Activated naive CD8-positive, alpha-beta T cell treated with anti-CD3 and anti-CD28 coated beads, Interleukin-2, amount 10 ng/mL, durations not matched to agents 7 days and 5 days (primary cell): ENCODE measurements at regions of chr15 and their contacts with region 1.

Region 1: GRCh38 chr15:40405501-40406381 is at the start of gene IVD:
- DNase-seq: peak; percentile 91
- ATAC-seq: peak; percentile 99
- H3K4me3 Mint-ChIP-seq: peak within 1 kb of the TSS; percentile 86
- H3K27ac Mint-ChIP-seq: peak within 1 kb of the TSS; percentile 93
- H3K4me1 Mint-ChIP-seq: peaks cover 32% of the 10 kb centered on the region
- H3K27me3 Mint-ChIP-seq: no peaks in the 10 kb centered on the region
- total RNA-seq, gene IVD: 92.4 to 95.2 TPM

Region 2: GRCh38 chr15:40367686-40368611 is 37.8 kb before region 1 on chr15:
- POLR2A ChIA-PET with region 1: interaction called, 11 read pairs
- DNase-seq: peak; percentile 91
- ATAC-seq: peak; percentile 94
- H3K4me3 Mint-ChIP-seq: peak overlapping the region; percentile 80
- H3K27ac Mint-ChIP-seq: peak overlapping the region; percentile 78
- H3K4me1 Mint-ChIP-seq: peaks cover 14% of the 10 kb centered on the region
- H3K27me3 Mint-ChIP-seq: peaks cover 15% of the 10 kb centered on the region

Region 3: DNA sequence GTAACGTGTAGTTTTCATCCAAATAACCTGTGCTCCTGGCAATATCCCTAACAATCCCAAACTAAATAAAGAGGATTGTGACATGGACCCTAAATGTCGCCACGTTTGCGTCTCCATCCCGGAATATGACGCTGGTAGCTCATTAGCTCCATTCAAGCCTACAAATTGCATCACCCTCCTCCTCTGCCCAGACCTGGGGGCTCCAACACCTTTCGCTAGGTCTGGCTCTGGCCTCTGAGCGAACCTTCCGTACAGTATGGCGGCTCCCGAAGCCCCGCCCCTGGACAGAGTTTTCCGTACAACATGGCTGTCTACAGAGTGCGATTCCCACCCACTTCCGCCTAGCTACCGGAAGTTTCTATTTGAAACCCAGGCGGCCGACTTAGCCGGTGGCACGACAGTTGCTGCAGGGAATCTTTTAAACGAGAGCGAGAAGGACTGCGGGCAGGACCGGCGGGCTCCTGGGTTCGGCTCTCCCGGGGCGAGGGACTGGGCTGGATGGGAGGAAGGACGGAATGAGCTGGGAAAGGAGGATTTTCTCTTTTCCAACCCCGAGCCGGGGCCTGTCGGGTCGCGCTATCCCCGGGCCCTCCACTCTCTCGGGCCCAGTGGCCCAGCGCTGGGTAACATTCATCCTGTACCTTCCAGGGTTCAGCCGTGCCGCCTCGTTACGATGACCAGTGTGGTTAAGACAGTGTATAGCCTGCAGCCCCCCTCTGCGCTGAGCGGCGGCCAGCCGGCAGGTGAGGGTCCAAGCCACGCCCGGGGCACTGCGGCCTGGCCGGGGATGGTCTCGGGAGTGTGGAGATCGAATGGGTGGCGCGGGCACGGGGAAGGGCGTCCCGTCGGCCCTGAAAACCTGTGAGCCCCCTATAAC is 22.9 kb before region 1 on chr15 and contains the start of gene KNSTRN:
- POLR2A ChIA-PET with region 1: interaction called, 31 read pairs
- DNase-seq: peak; percentile 86
- ATAC-seq: peak; percentile 97
- H3K4me3 Mint-ChIP-seq: peak within 1 kb of the TSS; percentile 99
- H3K27ac Mint-ChIP-seq: peak within 1 kb of the TSS; percentile 93
- H3K4me1 Mint-ChIP-seq: peaks cover 23% of the 10 kb centered on the region
- H3K27me3 Mint-ChIP-seq: peaks cover 8% of the 10 kb centered on the region
- total RNA-seq, gene KNSTRN: 47.0 to 49.5 TPM